CD4-positive, alpha-beta memory T cell (primary cell): ENCODE measurements at regions of chr1 and their contacts with region 1.

Region 1: DNA sequence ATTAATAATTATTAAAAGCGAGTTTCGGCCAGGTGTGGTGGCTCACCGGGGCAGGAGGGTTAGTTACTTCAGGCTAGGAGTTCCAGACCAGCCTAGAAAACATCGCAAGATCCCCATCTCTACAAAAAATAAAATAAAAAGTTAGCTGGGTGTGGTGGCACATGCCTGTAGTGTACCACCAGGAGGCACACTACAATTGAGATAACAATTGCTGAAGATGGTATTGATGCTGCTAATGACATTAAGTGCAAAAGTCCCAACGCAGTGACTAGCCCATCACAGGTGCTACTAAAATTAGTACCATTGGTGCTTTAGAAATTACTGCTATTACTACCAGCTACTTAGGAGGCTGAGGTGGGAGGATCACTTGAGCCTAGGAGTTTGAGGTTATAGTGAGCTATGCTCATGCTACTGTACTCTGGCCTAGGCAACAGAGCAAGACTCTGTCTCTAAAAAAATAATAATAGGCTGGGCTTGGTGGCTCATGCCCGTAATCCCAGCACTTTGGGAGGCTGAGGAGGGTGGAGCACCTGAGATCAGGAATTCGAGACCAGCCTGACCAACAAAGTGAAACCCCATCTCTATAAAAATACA is 156.6 kb downstream of the GREM2 start:
- DNase-seq: peak in 4 of 5 donors; percentile 30 to 53 (median 36)
- H3K4me3 ChIP-seq: no peak overlapping the region
- H3K4me3 Mint-ChIP-seq: no peak overlapping the region
- H3K27ac ChIP-seq: no peak overlapping the region
- H3K27ac Mint-ChIP-seq: no peak overlapping the region
- H3K4me1 ChIP-seq: no peaks in the 10 kb centered on the region
- H3K4me1 Mint-ChIP-seq: no peaks in the 10 kb centered on the region
- H3K27me3 ChIP-seq: no peaks in the 10 kb centered on the region
- H3K27me3 Mint-ChIP-seq: no peaks in the 10 kb centered on the region

Region 2: GRCh38 chr1:240350910-240351331 is 104.4 kb before region 1 on chr1:
- CTCF ChIA-PET with region 1: no interaction called
- POLR2A ChIA-PET with region 1: no interaction called
- intact Hi-C with region 1: no loop called
- DNase-seq: no peak
- H3K4me3 ChIP-seq: no peak overlapping the region
- H3K4me3 Mint-ChIP-seq: no peak overlapping the region
- H3K27ac ChIP-seq: no peak overlapping the region
- H3K27ac Mint-ChIP-seq: no peak overlapping the region
- H3K4me1 ChIP-seq: no peaks in the 10 kb centered on the region
- H3K4me1 Mint-ChIP-seq: no peaks in the 10 kb centered on the region
- H3K27me3 ChIP-seq: no peaks in the 10 kb centered on the region
- H3K27me3 Mint-ChIP-seq: peaks cover 0 to 2% of the 10 kb centered on the region in 2 donors

Region 3: GRCh38 chr1:240602189-240602588 is 146.9 kb after region 1 on chr1:
- CTCF ChIA-PET with region 1: interaction called, 35 read pairs
- POLR2A ChIA-PET with region 1: no interaction called
- intact Hi-C with region 1: no loop called
- DNase-seq: no peak
- H3K4me3 ChIP-seq: no peak overlapping the region
- H3K4me3 Mint-ChIP-seq: no peak overlapping the region
- H3K27ac ChIP-seq: no peak overlapping the region
- H3K27ac Mint-ChIP-seq: no peak overlapping the region
- H3K4me1 ChIP-seq: no peaks in the 10 kb centered on the region
- H3K4me1 Mint-ChIP-seq: peaks cover 0 to under 1% (median 0%) of the 10 kb centered on the region in 4 donors
- H3K27me3 ChIP-seq: no peaks in the 10 kb centered on the region
- H3K27me3 Mint-ChIP-seq: no peaks in the 10 kb centered on the region

Region 4: GRCh38 chr1:240691521-240692338 is 236.4 kb after region 1 on chr1:
- CTCF ChIA-PET with region 1: interaction called, 26 read pairs
- POLR2A ChIA-PET with region 1: no interaction called
- intact Hi-C with region 1: no loop called
- DNase-seq: peak in 4 of 5 donors; percentile 12 to 38 (median 20)
- H3K4me3 ChIP-seq: no peak overlapping the region
- H3K4me3 Mint-ChIP-seq: no peak overlapping the region
- H3K27ac ChIP-seq: no peak overlapping the region
- H3K27ac Mint-ChIP-seq: no peak overlapping the region
- H3K4me1 ChIP-seq: peaks cover 13% of the 10 kb centered on the region
- H3K4me1 Mint-ChIP-seq: peaks cover 6 to 22% (median 9%) of the 10 kb centered on the region in 4 donors
- H3K27me3 ChIP-seq: no peaks in the 10 kb centered on the region
- H3K27me3 Mint-ChIP-seq: no peaks in the 10 kb centered on the region